MCF 10A (cell line): ENCODE measurements at regions of chr17 and their contacts with region 1.

Region 1: GRCh38 chr17:37373530-37374159 is 2.1 kb upstream of the C17orf78 start:
- DNase-seq: peak; percentile 93
- H3K4me3 Mint-ChIP-seq: no peak overlapping the region
- H3K27ac Mint-ChIP-seq: no peak overlapping the region
- H3K4me1 Mint-ChIP-seq: peaks cover 8% of the 10 kb centered on the region
- H3K27me3 Mint-ChIP-seq: no peaks in the 10 kb centered on the region
- CTCF ChIP-seq: peak; percentile 99

Region 2: DNA sequence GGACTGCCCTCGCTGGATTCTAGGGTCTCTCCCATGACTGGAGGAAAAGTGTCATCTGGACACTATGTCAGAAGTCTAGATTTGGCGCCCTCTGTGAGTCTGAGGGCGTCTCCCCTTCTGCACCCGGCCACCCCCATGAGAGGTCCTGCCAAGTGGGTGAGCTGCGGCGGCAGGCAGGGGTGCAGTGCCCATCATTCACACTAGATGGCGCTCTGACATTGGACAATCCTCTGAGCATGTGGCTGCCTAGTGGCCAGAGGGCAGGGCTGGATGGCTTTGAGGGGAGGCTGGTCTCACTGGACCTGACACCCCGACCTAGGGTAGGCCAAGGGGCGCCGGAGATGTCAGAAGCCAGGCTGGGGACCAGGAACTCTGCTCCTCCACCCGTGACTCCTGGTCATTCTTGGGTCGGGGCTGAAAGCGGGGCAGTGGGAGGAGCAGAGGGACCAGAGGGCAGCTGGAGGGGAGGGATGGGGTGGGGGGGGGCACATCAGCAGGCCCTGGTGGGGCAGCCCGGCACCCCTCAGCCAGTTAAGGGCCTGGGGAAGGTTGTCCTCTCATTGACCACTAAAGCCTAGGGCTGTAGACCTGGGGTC is 744.3 kb before region 1 on chr17:
- CTCF ChIA-PET with region 1: interaction called, 3 read pairs
- POLR2A ChIA-PET with region 1: no interaction called
- intact Hi-C with region 1: loop called (anchors 5 kb)
- DNase-seq: peak; percentile 70
- H3K4me3 Mint-ChIP-seq: no peak overlapping the region
- H3K27ac Mint-ChIP-seq: no peak overlapping the region
- H3K4me1 Mint-ChIP-seq: no peaks in the 10 kb centered on the region
- H3K27me3 Mint-ChIP-seq: peaks cover 34% of the 10 kb centered on the region
- CTCF ChIP-seq: peak; percentile 99

Region 3: GRCh38 chr17:37358830-37359681 is 14.6 kb before region 1 on chr17:
- CTCF ChIA-PET with region 1: interaction called, 15 read pairs
- POLR2A ChIA-PET with region 1: interaction called, 10 read pairs
- intact Hi-C with region 1: loop called (anchors 2 kb)
- DNase-seq: peak; percentile 96
- H3K4me3 Mint-ChIP-seq: peak overlapping the region; percentile 94
- H3K27ac Mint-ChIP-seq: peak overlapping the region; percentile 73
- H3K4me1 Mint-ChIP-seq: peaks cover 31% of the 10 kb centered on the region
- H3K27me3 Mint-ChIP-seq: no peaks in the 10 kb centered on the region
- CTCF ChIP-seq: peak; percentile 23

Region 4: DNA sequence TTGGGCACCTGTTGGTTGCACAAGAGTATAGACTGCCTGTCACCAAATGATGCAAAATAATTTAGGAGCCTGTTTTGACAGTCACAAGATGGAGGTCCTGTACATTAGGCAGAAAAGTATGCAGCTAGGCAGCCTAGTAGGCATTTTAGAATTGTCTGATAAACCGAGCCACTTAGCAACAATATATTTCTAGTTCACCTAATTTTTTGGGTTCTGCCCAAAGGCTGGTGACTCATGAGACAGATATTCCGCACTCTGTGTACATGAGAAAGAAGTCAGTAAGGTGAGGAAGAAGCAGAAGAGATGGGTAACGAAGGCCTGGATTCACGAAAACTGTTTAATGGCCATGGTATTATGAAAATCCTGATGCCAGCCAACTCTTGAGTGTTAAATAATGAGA is 25.8 kb after region 1 on chr17:
- CTCF ChIA-PET with region 1: interaction called, 31 read pairs
- POLR2A ChIA-PET with region 1: interaction called, 6 read pairs
- intact Hi-C with region 1: loop called (anchors 1 kb)
- DNase-seq: peak; percentile 77
- H3K4me3 Mint-ChIP-seq: no peak overlapping the region
- H3K27ac Mint-ChIP-seq: peak overlapping the region; percentile 13
- H3K4me1 Mint-ChIP-seq: peaks cover 11% of the 10 kb centered on the region
- H3K27me3 Mint-ChIP-seq: no peaks in the 10 kb centered on the region
- CTCF ChIP-seq: no peak

Region 5: DNA sequence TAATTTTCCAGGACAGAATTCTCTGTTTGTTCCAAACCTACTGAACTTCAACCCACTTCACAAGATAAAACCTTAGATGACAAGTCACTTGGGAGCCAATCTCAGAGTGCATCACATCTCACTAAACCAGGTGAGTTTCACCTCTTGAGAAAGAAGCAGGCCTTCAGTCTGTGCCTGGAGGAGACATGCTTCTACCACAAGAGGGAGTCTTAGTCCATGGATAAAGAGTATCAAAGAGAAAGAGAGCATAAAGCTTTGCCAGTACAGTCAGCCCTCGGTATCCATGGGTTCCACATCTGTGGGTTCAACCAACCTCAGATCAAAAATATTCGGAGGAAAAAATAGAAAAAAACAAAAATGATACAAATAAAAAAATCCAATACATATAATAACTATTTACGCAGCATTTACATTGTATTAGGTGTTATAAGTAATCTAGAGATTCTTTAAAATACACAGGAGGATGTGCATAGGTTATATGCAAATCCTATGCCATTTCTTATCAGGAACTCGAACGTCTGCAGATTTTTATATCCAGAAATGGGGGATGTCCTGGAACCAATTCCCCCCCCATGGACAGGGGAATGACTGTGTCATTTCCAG is 153.7 kb after region 1 on chr17:
- CTCF ChIA-PET with region 1: interaction called, 4 read pairs
- POLR2A ChIA-PET with region 1: no interaction called
- intact Hi-C with region 1: loop called (anchors 10 kb)
- DNase-seq: peak; percentile 74
- H3K4me3 Mint-ChIP-seq: no peak overlapping the region
- H3K27ac Mint-ChIP-seq: no peak overlapping the region
- H3K4me1 Mint-ChIP-seq: no peaks in the 10 kb centered on the region
- H3K27me3 Mint-ChIP-seq: no peaks in the 10 kb centered on the region
- CTCF ChIP-seq: peak; percentile 50

Region 6: GRCh38 chr17:37562016-37562745 is 188.5 kb after region 1 on chr17:
- CTCF ChIA-PET with region 1: no interaction called
- POLR2A ChIA-PET with region 1: no interaction called
- intact Hi-C with region 1: no loop called
- DNase-seq: no peak
- H3K4me3 Mint-ChIP-seq: no peak overlapping the region
- H3K27ac Mint-ChIP-seq: no peak overlapping the region
- H3K4me1 Mint-ChIP-seq: no peaks in the 10 kb centered on the region
- H3K27me3 Mint-ChIP-seq: no peaks in the 10 kb centered on the region
- CTCF ChIP-seq: no peak